HCT116 (cell line): ENCODE measurements at regions of chr2 and their contacts with region 1.

Region 1: DNA sequence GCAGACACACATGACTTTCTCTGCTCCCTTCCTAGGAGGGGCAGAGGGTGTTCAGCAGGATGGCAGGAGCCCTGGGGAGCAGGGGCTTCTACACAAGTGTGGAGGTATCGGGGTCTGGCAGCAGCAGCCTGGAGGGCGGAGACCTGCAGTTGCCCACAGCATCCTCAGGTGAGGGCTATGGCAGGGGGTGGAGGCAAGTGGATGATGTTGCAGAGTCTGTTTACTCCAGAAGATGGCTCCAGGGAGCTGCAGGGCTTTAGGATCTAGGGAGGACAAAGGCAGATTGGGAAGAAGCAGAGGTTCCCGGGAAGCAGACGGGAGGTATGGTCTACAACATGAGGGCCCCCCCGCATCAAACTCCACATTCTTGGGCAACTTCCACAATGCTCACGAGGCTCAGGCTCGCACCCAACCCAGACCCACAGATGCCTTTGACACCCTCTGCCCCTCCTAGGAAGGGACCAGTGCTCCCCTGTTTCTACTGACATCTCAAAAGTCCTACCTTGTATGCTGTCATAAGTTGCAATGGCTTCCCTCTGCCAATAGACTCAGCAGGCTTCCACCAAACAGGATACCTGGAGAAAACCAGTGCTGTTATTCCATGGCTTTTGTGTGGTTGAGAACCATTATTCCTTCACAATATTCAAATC is 12.0 kb upstream of the ATP6V1C2 start:
- DNase-seq: peak; percentile 57
- ATAC-seq: peak; percentile 99
- H3K4me3 ChIP-seq: no peak overlapping the region
- H3K27ac ChIP-seq: no peak overlapping the region
- H3K4me1 ChIP-seq: peaks cover 3 to 11% of the 10 kb centered on the region in 2 experiments; a peak in 2 of 4 replicates
- H3K27me3 ChIP-seq: no peaks in the 10 kb centered on the region
- CTCF ChIP-seq: peak; percentile 71 to 76 (median 74)
- POLR2A ChIP-seq: no peak
- RAD21 ChIP-seq: peak; percentile 87

Region 2: DNA sequence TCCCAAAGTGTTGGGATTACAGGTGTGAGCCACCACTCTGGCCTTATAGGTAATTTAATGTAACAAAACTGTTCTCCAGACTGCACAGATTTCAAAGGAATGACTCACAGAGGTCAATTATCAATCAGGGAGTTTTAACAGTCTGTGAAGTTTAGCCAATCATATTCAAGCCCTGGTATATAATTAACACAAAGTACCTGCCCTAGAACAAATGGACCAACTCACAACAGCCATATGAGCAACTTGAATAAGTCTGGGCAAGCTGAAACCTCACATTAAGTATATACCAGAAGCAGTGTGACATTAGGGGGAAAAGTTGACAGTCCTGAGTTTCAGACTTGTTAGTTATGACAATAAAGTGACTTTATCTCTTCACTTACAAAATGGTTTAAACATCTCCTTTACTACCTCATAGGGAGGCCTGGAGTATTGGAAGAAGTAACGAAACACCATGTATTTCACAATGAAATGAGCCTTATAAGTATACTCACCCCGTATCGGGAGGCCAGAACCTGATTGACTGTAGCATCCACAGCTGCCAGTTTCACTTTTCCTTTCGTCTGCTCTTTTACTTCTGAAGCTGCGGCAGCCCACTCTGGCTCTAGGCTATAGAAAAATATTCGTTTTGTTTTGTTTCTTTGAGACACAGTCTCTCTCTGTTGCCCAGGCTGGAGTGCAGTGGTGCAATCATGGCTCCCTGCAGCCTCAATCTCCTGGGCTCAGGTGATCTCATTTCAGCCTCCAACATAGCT is 81.0 kb after region 1 on chr2:
- CTCF ChIA-PET with region 1: no interaction called
- POLR2A ChIA-PET with region 1: no interaction called
- RAD21 ChIA-PET with region 1: no interaction called
- intact Hi-C with region 1: loop called (anchors 5 kb)
- DNase-seq: no peak
- ATAC-seq: no peak
- H3K4me3 ChIP-seq: no peak overlapping the region
- H3K27ac ChIP-seq: no peak overlapping the region
- H3K4me1 ChIP-seq: no peaks in the 10 kb centered on the region
- H3K27me3 ChIP-seq: no peaks in the 10 kb centered on the region
- CTCF ChIP-seq: no peak
- POLR2A ChIP-seq: no peak
- RAD21 ChIP-seq: no peak

Region 3: GRCh38 chr2:10812362-10813162 is 103.1 kb after region 1 on chr2 and contains the start of gene PDIA6:
- CTCF ChIA-PET with region 1: no interaction called
- POLR2A ChIA-PET with region 1: no interaction called
- RAD21 ChIA-PET with region 1: no interaction called
- intact Hi-C with region 1: loop called (anchors 5 kb)
- DNase-seq: peak; percentile 92
- ATAC-seq: peak; percentile 95
- H3K4me3 ChIP-seq: peak within 1 kb of the TSS; percentile 65 to 87
- H3K27ac ChIP-seq: peak within 1 kb of the TSS; percentile 89
- H3K4me1 ChIP-seq: peaks cover 5 to 30% of the 10 kb centered on the region in 2 experiments; a peak in 3 of 4 replicates
- H3K27me3 ChIP-seq: no peaks in the 10 kb centered on the region
- CTCF ChIP-seq: no peak
- POLR2A ChIP-seq: peak; percentile 36
- RAD21 ChIP-seq: no peak
- total RNA-seq, gene PDIA6: 149 TPM

Region 4: GRCh38 chr2:10883801-10884478 is 174.5 kb after region 1 on chr2:
- CTCF ChIA-PET with region 1: no interaction called
- POLR2A ChIA-PET with region 1: no interaction called
- RAD21 ChIA-PET with region 1: no interaction called
- intact Hi-C with region 1: no loop called
- DNase-seq: no peak
- ATAC-seq: no peak
- H3K4me3 ChIP-seq: no peak overlapping the region
- H3K27ac ChIP-seq: no peak overlapping the region
- H3K4me1 ChIP-seq: no peaks in the 10 kb centered on the region
- H3K27me3 ChIP-seq: no peaks in the 10 kb centered on the region
- CTCF ChIP-seq: no peak
- POLR2A ChIP-seq: no peak
- RAD21 ChIP-seq: no peak

Region 5: DNA sequence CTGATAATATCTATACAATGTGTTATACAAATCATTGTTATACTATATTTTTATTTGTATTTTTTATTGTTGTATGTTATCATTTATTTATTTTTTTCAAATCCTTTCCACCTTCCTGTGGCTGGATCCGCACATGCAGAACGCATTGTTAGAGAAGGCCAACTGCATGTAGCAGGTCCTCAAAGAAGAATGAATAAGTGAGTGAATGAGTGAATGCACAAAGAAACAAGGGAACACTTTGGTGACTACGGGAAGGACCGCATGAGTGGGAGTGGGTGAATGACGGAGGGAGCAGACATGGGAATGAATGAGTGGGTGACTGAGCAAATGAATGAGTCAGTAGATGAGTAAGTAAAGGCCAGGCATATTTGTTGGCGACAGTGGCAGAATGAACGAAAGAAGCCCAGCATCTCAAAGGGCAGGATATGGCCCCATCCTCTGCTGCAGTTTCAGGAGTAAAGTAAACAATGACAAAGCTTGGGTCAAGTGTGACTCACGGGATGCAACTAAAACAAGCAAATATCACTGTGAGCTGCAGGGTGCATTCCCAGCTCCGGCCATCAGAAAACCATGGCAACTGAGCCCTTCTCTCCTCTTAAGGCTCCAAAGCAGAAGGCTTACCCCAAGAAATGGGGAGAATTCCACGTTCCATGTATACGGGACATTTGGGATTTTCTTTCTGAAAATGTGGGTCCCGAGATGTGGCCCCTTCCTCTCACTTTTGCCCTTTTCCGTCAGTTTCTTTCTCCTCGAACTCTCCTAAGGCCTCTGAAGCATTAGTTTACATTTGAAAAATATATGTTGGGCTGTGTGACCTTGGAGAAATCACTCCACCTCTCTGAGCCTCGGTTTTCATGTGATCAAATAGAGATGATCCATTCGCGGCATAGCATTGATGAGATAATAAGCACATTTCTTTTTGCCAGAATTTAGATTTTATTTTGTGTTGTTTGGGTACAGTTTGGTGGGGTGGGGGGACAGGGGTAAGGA is 226.8 kb after region 1 on chr2:
- CTCF ChIA-PET with region 1: no interaction called
- POLR2A ChIA-PET with region 1: no interaction called
- RAD21 ChIA-PET with region 1: no interaction called
- intact Hi-C with region 1: no loop called
- DNase-seq: peak; percentile 94
- ATAC-seq: peak; percentile 90
- H3K4me3 ChIP-seq: peak overlapping the region; percentile 16 to 36; a peak in 3 of 4 replicates
- H3K27ac ChIP-seq: peak overlapping the region; percentile 45; the same call in 1 of the 2 replicates
- H3K4me1 ChIP-seq: peaks cover 19 to 65% of the 10 kb centered on the region in 2 experiments
- H3K27me3 ChIP-seq: no peaks in the 10 kb centered on the region
- CTCF ChIP-seq: no peak
- POLR2A ChIP-seq: no peak
- RAD21 ChIP-seq: peak; percentile 45

Region 6: GRCh38 chr2:11213090-11213638 is 503.7 kb after region 1 on chr2:
- CTCF ChIA-PET with region 1: no interaction called
- POLR2A ChIA-PET with region 1: no interaction called
- RAD21 ChIA-PET with region 1: no interaction called
- intact Hi-C with region 1: no loop called
- DNase-seq: no peak
- ATAC-seq: no peak
- H3K4me3 ChIP-seq: no peak overlapping the region
- H3K27ac ChIP-seq: no peak overlapping the region
- H3K4me1 ChIP-seq: no peaks in the 10 kb centered on the region
- H3K27me3 ChIP-seq: no peaks in the 10 kb centered on the region
- CTCF ChIP-seq: no peak
- POLR2A ChIP-seq: no peak
- RAD21 ChIP-seq: no peak